ENCODE measurements at regions of chr7 and their contacts with region 1.

Region 1: DNA sequence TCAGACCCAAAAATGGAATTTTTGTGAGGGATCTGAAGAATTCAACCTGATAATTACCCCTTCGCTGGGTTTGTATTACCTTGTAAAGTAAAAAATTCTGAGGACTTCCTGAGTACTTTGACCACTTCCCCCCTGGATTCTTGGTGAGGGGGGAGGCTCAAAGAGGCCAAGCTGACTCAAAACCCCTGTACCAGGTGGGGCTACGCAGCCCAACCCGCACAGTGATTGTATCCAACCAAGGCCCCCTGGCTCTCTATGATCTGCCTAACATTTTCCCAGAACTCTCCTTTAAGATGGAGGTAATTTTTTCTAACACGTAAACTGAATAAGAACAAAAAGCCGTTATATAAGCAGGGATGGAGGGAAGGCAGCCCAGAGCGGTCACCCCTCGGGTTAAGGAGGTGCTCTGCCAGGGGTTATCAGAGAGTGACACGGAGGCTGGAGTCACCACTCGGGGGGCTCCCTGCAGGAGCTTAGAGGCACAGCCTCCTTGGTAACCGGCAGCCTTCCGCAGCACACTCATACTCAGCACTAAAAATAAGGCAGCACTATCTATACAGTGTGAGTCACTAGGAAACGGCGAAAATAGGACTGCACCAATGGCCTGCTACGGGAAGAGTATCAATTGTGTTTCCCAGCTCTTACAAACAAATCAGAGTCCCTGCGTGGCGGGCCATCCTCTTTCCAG is 255.4 kb downstream of the ELMO1 start:
- DNase-seq: no peak
- H3K4me3 ChIP-seq: no peak overlapping the region
- H3K27me3 ChIP-seq: no peaks in the 10 kb centered on the region
- CTCF ChIP-seq: no peak

Region 2: DNA sequence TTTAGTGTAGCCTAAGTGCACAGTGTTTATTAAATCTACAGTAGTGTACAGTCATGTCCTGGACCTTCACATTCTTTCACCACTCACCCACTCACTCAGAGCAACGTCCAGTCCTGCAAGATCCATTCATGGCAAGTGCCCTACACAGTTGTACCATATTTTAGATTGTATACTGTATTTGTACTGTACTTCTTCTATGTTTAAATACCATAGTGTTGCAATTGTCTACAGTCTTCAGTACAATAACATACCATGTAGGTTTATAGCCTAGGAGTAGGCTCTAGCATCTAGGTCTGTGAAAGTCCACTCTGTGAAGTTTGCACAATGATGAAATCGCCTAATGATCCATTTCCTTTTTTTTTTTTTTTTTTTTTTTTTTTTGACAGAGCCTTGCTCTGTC is 1028.2 kb before region 1 on chr7:
- CTCF ChIA-PET with region 1: no interaction called
- POLR2A ChIA-PET with region 1: no interaction called
- DNase-seq: no peak
- H3K4me3 ChIP-seq: no peak overlapping the region
- H3K27me3 ChIP-seq: no peaks in the 10 kb centered on the region
- CTCF ChIP-seq: no peak

Region 3: GRCh38 chr7:36967387-36967786 is 225.8 kb before region 1 on chr7:
- CTCF ChIA-PET with region 1: interaction called, 92 read pairs
- POLR2A ChIA-PET with region 1: no interaction called
- DNase-seq: no peak
- H3K4me3 ChIP-seq: no peak overlapping the region
- H3K27me3 ChIP-seq: no peaks in the 10 kb centered on the region
- CTCF ChIP-seq: peak; percentile 83

Region 4: GRCh38 chr7:37284805-37285231 is 91.6 kb after region 1 on chr7:
- CTCF ChIA-PET with region 1: no interaction called
- POLR2A ChIA-PET with region 1: no interaction called
- DNase-seq: no peak
- H3K4me3 ChIP-seq: no peak overlapping the region
- H3K27me3 ChIP-seq: no peaks in the 10 kb centered on the region
- CTCF ChIP-seq: no peak

Measured in BJ (cell line).